Esophagus squamous epithelium (tissue), 5 donors: ENCODE measurements at regions of chr9 and their contacts with region 1.

Region 1: GRCh38 chr9:18255158-18255629 is 218.8 kb upstream of the ADAMTSL1 start:
- DNase-seq: peak; percentile 9
- H3K4me3 ChIP-seq: no peak overlapping the region
- H3K27ac ChIP-seq: no peak overlapping the region
- H3K4me1 ChIP-seq: no peaks in the 10 kb centered on the region
- H3K27me3 ChIP-seq: no peaks in the 10 kb centered on the region
- CTCF ChIP-seq: peak; percentile 69 to 96 (median 91)
- POLR2A ChIP-seq: no peak

Region 2: DNA sequence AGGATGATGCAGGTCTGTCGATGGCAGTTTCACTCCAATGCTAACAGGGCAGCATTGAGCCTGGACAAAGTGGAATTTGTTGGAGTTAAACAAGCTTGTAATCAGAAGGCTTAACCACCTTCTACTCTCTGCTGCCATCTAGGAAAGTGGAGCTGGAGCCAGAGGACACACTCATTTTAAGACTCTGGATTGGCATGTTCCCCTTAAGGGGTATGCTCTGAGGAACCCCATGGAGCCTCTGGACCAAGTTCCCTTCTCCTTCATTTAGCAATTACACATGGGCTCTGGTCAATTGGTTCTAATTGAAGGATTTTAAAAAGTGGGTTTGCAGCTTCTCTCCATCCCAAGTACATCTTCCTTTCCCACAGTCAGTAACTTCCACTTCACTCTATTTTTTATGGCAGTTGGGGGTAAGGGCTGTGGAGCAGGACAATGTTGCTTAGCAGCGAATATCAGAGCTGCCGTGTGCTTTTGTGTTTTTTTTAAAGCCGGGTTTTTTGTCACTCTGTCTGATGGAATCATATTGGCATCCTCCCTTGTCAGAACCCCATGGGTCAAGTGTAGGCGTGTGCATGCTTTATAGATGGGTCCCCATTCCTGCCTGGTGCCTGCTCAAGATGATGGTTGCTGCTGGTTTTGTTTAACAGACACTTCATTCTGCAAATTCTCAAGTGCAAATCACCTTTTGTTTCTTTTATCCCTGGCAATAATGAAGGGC is 112.0 kb before region 1 on chr9:
- intact Hi-C with region 1: no loop called
- DNase-seq: no peak
- H3K4me3 ChIP-seq: no peak overlapping the region
- H3K27ac ChIP-seq: no peak overlapping the region
- H3K4me1 ChIP-seq: no peaks in the 10 kb centered on the region
- H3K27me3 ChIP-seq: no peaks in the 10 kb centered on the region
- CTCF ChIP-seq: no peak
- POLR2A ChIP-seq: no peak

Region 3: DNA sequence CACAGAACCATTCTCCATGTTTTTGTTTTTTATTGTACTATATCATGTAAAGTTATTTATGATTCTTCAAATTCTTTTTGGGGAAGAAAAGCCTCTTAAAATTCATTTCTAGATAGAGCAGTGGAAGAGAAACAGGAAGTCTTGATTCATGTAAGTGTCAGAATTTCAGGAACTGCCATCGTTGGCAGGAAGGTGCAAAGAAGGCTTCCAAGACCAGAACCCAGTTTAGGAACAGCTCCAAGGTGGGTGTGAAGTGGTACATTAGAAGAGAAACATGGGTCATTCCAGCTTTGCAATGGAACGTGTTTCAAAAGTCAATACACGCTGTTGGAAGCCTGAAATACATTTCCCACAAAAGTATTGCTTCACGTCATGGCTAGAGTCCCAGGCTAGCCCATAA is 763.0 kb after region 1 on chr9:
- intact Hi-C with region 1: loop called (anchors 10 kb)
- DNase-seq: no peak
- H3K4me3 ChIP-seq: no peak overlapping the region
- H3K27ac ChIP-seq: no peak overlapping the region
- H3K4me1 ChIP-seq: peaks cover 0 to under 1% (median 0%) of the 10 kb centered on the region in 3 donors
- H3K27me3 ChIP-seq: no peaks in the 10 kb centered on the region
- CTCF ChIP-seq: no peak
- POLR2A ChIP-seq: no peak